WTC11 (cell line): ENCODE measurements at regions of chr6 and their contacts with region 1.

Region 1: GRCh38 chr6:127186889-127187288 is 68.4 kb downstream of the RSPO3 start:
- DNase-seq: peak; percentile 81
- ATAC-seq: peak; percentile 80
- H3K4me3 Mint-ChIP-seq: no peak overlapping the region
- H3K27ac Mint-ChIP-seq: no peak overlapping the region
- H3K4me1 Mint-ChIP-seq: peaks cover 12% of the 10 kb centered on the region
- H3K27me3 Mint-ChIP-seq: no peaks in the 10 kb centered on the region
- CTCF ChIP-seq: peak; percentile 80

Region 2: DNA sequence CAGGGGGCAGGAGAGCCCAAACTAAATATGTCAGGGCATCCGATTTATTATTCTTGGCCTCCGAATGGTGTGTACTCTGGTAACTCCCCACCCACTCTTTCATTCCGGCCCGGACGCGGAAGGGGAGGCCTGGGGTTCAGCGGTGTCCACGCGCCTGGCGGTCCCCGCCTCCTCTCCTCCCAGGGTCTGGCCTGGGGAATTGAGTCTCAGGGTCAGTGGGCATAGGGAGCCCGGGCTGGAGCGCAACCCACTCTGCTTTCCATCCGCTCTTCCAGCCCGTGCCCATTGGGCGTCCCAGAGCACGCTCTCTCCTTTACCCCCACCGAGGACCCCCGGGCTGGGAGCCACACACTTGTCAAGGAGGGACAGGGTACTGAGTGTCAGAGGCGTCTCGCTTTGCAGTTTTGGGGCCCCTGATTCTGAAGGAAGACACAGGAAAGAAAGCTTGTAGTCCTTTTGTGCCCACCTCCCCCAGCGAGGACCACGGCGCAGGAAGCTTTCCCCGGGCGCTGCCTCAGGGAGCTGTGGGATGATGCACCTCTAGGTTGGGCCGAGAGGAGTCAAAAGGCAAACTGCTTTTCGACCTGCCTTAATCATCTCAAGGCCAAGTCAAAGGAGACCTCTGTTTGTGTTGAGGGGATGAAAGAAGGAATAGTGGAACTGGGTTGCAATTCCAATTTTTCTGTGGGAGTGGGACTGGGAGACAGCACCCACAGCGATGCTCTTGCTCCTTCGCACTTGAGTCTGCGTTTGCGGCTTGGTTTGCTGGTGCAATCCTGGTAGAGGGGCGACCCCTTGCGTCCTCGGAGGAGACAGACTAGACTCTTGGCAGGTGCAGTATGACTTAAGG is 65.9 kb before region 1 on chr6:
- CTCF ChIA-PET with region 1: interaction called, 13 read pairs
- POLR2A ChIA-PET with region 1: no interaction called
- DNase-seq: peak; percentile 90
- ATAC-seq: peak; percentile 67
- H3K4me3 Mint-ChIP-seq: peak overlapping the region; percentile 76
- H3K27ac Mint-ChIP-seq: no peak overlapping the region
- H3K4me1 Mint-ChIP-seq: peaks cover 21% of the 10 kb centered on the region
- H3K27me3 Mint-ChIP-seq: peaks cover 68% of the 10 kb centered on the region
- CTCF ChIP-seq: peak; percentile 67

Region 3: DNA sequence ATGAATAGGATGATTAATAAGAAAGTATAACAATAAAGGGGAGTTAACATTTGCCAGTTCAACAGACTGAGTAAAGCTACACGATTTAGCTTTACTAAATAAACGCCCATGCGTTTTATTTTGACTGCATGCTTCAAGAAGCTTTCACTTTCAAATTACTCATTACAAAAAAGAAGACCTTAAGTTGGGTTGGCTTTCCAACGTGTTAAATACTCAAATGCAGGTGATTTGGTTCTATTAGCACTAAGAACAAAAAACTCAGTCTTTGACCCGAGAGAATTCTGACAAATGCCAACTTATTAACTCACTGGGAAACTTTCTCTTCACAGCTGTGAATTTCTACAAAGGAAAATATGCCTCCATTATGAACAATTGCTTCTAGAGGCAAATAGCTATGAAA is 104.6 kb after region 1 on chr6:
- CTCF ChIA-PET with region 1: interaction called, 10 read pairs
- POLR2A ChIA-PET with region 1: no interaction called
- DNase-seq: no peak
- ATAC-seq: no peak
- H3K4me3 Mint-ChIP-seq: no peak overlapping the region
- H3K27ac Mint-ChIP-seq: peak overlapping the region; percentile 55
- H3K4me1 Mint-ChIP-seq: peaks cover 25% of the 10 kb centered on the region
- H3K27me3 Mint-ChIP-seq: no peaks in the 10 kb centered on the region
- CTCF ChIP-seq: no peak